ENCODE measurements at regions of chr9 and their contacts with region 1.

Region 1: DNA sequence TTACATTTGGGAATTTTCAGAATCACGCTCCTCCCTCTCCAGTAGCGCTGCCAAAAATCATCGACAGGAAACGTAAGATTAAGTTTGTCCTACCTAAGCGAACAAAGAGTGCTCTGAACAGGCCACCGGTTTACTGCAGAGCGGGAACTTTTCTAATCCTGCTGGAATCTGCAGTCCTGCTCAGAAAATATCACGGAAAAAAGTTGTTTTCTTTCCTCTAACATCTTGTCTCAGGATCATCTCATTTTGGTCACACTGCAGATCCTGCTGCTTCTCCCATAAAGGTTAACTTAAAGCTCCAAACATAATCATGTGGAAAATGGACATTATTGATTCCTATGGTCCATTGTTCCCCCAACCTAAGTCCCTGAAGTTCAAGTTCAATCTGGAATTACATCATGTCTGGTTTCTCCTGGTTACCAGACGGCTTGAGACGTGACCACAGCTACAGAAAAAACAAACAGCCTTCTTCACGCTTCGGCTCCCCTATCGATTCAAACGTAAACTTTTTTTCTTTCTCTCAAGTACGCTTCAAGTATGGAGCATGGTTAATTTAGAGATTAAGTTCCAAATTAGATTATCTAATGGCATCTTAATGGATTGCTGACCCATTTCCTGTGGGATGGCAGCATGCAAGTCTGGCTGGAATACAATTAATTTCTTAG is 217.6 kb downstream of the NFIB start:
- DNase-seq: peak in 2 of 3 donors; percentile 22 to 47
- ATAC-seq: peak; percentile 82 to 90
- H3K4me3 ChIP-seq: peak overlapping the region; percentile 55
- H3K27ac ChIP-seq: peak overlapping the region; percentile 77
- H3K4me1 ChIP-seq: peaks cover 5% of the 10 kb centered on the region
- H3K27me3 ChIP-seq: no peaks in the 10 kb centered on the region

Region 2: DNA sequence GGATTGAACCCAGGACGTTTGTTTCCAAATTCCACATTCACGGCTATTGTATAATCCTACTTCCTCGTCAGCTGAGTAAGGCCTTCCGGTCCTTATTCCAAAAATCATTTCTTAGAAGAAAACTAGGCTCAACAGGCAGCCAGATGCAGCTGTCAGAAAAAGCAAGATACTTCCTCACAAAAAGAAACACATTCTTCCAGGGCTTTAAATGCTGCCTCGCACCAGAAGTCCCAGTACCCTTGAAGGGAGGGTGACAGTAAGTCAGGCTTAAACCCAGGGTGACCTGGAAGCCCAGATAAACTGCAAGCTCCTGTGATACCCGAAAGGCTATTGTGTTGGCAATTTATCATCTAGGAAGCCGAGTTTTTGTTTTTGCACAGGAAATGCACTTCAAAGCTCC is 196.5 kb before region 1 on chr9:
- intact Hi-C with region 1: loop called in 1 of 4 experiments (anchors 10 kb)
- DNase-seq: no peak
- ATAC-seq: peak; percentile 59 to 78
- H3K4me3 ChIP-seq: no peak overlapping the region
- H3K27ac ChIP-seq: peak overlapping the region; percentile 51
- H3K4me1 ChIP-seq: peaks cover 3% of the 10 kb centered on the region
- H3K27me3 ChIP-seq: no peaks in the 10 kb centered on the region

Region 3: GRCh38 chr9:14062586-14063221 is 33.7 kb before region 1 on chr9:
- intact Hi-C with region 1: no loop called
- DNase-seq: no peak
- ATAC-seq: peak in 1 of 2 donors; percentile 29
- H3K4me3 ChIP-seq: no peak overlapping the region
- H3K27ac ChIP-seq: no peak overlapping the region
- H3K4me1 ChIP-seq: no peaks in the 10 kb centered on the region
- H3K27me3 ChIP-seq: no peaks in the 10 kb centered on the region

Region 4: GRCh38 chr9:14198841-14199455 is 102.6 kb after region 1 on chr9:
- intact Hi-C with region 1: no loop called
- DNase-seq: peak; percentile 74 to 89 (median 84)
- ATAC-seq: peak; percentile 84 to 89
- H3K4me3 ChIP-seq: peak overlapping the region; percentile 39
- H3K27ac ChIP-seq: peak overlapping the region; percentile 99
- H3K4me1 ChIP-seq: peaks cover 18% of the 10 kb centered on the region
- H3K27me3 ChIP-seq: no peaks in the 10 kb centered on the region